ENCODE measurements at regions of chr4 and their contacts with region 1.

Region 1: GRCh38 chr4:25312496-25313200 is at the start of gene ZCCHC4:
- DNase-seq: peak; percentile 79 to 96 (median 88)
- ATAC-seq: peak; percentile 99
- H3K4me3 ChIP-seq: peak within 1 kb of the TSS; percentile 70
- H3K4me3 Mint-ChIP-seq: peak within 1 kb of the TSS; percentile 97
- H3K27ac ChIP-seq: peak within 1 kb of the TSS; percentile 0 to 40
- H3K27ac Mint-ChIP-seq: peak within 1 kb of the TSS; percentile 90
- H3K4me1 ChIP-seq: peaks cover 13% of the 10 kb centered on the region
- H3K4me1 Mint-ChIP-seq: peaks cover 16% of the 10 kb centered on the region
- H3K27me3 ChIP-seq: peaks cover 0 to 3% of the 10 kb centered on the region in 2 experiments
- H3K27me3 Mint-ChIP-seq: peaks cover 14% of the 10 kb centered on the region
- CTCF ChIP-seq: peak; percentile 100
- total RNA-seq, gene ZCCHC4: 6.4 to 6.7 TPM

Region 2: DNA sequence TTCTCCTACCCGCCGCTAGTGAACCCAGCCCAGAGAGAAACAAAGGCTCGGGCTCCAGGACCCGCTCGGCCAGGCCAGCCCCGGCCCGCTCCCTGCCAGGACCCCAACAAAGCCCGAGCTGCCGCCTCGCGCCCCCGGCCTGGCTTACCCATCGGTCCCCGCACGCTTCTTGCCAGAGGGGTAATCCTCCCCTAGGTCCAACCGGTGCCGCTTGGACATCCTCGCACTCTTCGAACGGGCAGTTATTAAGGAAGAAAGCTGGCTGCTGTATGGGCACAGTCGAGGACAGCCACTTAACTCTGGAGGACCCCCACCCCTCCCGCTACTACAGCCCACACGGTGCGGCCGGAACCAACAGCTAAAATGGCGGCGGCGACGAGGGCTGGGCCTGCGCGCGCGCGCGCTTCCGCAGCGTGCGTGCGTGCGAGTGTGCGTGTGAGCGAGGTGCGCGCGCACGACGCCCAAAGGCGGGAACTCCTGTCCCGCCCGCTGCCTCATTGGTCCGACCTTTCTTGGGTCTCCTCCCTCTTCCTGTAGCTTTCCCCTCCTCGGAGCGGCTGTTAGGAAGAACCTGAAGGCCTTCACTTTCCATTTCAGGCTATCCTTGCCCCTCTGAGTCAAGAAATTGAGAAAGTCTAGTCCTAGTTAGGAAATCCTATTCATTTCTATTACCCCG is 728.3 kb before region 1 on chr4 and contains the start of gene DHX15:
- CTCF ChIA-PET with region 1: interaction called, 6 read pairs
- POLR2A ChIA-PET with region 1: interaction called, 8 read pairs
- intact Hi-C with region 1: loop called in 1 of 2 experiments (anchors 5 kb)
- DNase-seq: peak; percentile 83 to 99 (median 90)
- ATAC-seq: peak; percentile 93
- H3K4me3 ChIP-seq: peak within 1 kb of the TSS; percentile 95
- H3K4me3 Mint-ChIP-seq: peak within 1 kb of the TSS; percentile 96
- H3K27ac ChIP-seq: peak within 1 kb of the TSS; percentile 94 to 96
- H3K27ac Mint-ChIP-seq: peak within 1 kb of the TSS; percentile 86
- H3K4me1 ChIP-seq: peaks cover 28% of the 10 kb centered on the region
- H3K4me1 Mint-ChIP-seq: peaks cover 41% of the 10 kb centered on the region
- H3K27me3 ChIP-seq: no peaks in the 10 kb centered on the region
- H3K27me3 Mint-ChIP-seq: peaks cover 5% of the 10 kb centered on the region
- CTCF ChIP-seq: no peak
- total RNA-seq, gene DHX15: 208 to 209 TPM

Region 3: GRCh38 chr4:25234390-25235370 is 78.0 kb before region 1 on chr4:
- CTCF ChIA-PET with region 1: interaction called, 71 read pairs
- POLR2A ChIA-PET with region 1: interaction called, 73 read pairs
- intact Hi-C with region 1: loop called (anchors 1 to 2 kb)
- DNase-seq: peak in 13 of 14 experiments; percentile 5 to 88 (median 18)
- ATAC-seq: peak; percentile 51
- H3K4me3 ChIP-seq: peak overlapping the region; percentile 86
- H3K4me3 Mint-ChIP-seq: peak overlapping the region; percentile 87
- H3K27ac ChIP-seq: peak overlapping the region; percentile 71 to 88
- H3K27ac Mint-ChIP-seq: peak overlapping the region; percentile 91
- H3K4me1 ChIP-seq: peaks cover 29% of the 10 kb centered on the region
- H3K4me1 Mint-ChIP-seq: peaks cover 41% of the 10 kb centered on the region
- H3K27me3 ChIP-seq: no peaks in the 10 kb centered on the region
- H3K27me3 Mint-ChIP-seq: no peaks in the 10 kb centered on the region
- CTCF ChIP-seq: peak; percentile 70

Region 4: GRCh38 chr4:25330905-25331808 is 18.5 kb after region 1 on chr4:
- CTCF ChIA-PET with region 1: interaction called, 14 read pairs
- POLR2A ChIA-PET with region 1: interaction called, 8 read pairs
- intact Hi-C with region 1: no loop called
- DNase-seq: peak in 2 of 14 experiments; percentile 22 to 42
- ATAC-seq: peak; percentile 39
- H3K4me3 ChIP-seq: peak overlapping the region; percentile 44
- H3K4me3 Mint-ChIP-seq: peak overlapping the region; percentile 89
- H3K27ac ChIP-seq: peak overlapping the region in 1 of 2 donors; percentile 43
- H3K27ac Mint-ChIP-seq: peak overlapping the region; percentile 88
- H3K4me1 ChIP-seq: peaks cover 12% of the 10 kb centered on the region
- H3K4me1 Mint-ChIP-seq: peaks cover 14% of the 10 kb centered on the region
- H3K27me3 ChIP-seq: no peaks in the 10 kb centered on the region
- H3K27me3 Mint-ChIP-seq: no peaks in the 10 kb centered on the region
- CTCF ChIP-seq: no peak

Region 5: DNA sequence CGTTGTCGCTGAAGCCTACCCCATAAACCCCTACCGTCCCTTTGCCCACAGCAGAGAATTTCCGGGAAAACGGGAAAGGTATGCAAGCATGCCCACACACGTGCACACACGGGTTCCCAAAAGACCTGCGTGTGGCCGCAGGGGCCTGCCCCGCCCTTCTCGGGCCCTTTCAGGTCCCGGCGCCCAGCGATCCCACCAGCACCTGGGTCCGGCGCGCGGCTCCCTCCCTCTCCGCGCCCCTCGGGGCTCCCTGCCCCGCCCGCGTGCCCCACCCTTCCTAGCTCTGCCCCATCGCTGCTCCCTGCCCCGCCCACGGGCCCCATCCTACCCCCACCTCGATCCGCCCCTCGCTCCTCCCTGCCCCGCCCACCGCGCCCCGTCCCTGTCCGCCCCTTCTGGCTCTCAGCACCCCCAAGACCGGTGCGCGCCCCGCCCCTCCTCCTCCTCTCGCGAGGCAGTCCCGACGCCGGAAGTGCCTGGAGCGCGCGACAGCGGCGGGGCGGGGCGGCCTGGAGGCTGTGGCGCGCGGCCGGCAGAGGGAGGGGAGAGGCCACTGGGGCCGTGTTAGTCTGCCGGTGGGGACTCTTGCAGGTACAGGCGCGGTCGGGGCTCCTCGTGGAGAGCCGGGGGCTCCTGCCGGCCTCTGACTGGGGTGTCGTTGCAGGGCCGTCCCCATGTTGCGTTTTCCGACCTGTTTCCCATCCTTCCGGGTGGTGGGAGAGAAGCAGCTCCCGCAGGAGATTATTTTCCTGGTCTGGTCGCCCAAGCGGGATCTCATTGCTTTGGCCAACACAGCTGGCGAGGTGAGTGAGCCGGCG is 64.3 kb after region 1 on chr4 and contains the start of gene ANAPC4:
- CTCF ChIA-PET with region 1: interaction called, 24 read pairs
- POLR2A ChIA-PET with region 1: interaction called, 22 read pairs
- intact Hi-C with region 1: loop called (anchors 1 kb)
- DNase-seq: peak; percentile 95 to 99 (median 97)
- ATAC-seq: peak; percentile 94
- H3K4me3 ChIP-seq: peak within 1 kb of the TSS; percentile 94
- H3K4me3 Mint-ChIP-seq: no peak within 1 kb of the TSS
- H3K27ac ChIP-seq: peak within 1 kb of the TSS; percentile 42 to 48
- H3K27ac Mint-ChIP-seq: peak within 1 kb of the TSS; percentile 81
- H3K4me1 ChIP-seq: peaks cover 34% of the 10 kb centered on the region
- H3K4me1 Mint-ChIP-seq: peaks cover 7% of the 10 kb centered on the region
- H3K27me3 ChIP-seq: no peaks in the 10 kb centered on the region
- H3K27me3 Mint-ChIP-seq: no peaks in the 10 kb centered on the region
- CTCF ChIP-seq: no peak
- total RNA-seq, gene ANAPC4: 24.4 to 26.0 TPM

Region 6: GRCh38 chr4:26583865-26584652 is 1271.4 kb after region 1 on chr4 and contains the start of gene TBC1D19:
- CTCF ChIA-PET with region 1: no interaction called
- POLR2A ChIA-PET with region 1: interaction called, 3 read pairs
- intact Hi-C with region 1: loop called in 1 of 2 experiments (anchors 5 kb)
- DNase-seq: peak; percentile 78 to 93 (median 86)
- ATAC-seq: peak; percentile 87
- H3K4me3 ChIP-seq: peak within 1 kb of the TSS; percentile 76
- H3K4me3 Mint-ChIP-seq: peak within 1 kb of the TSS; percentile 96
- H3K27ac ChIP-seq: peak within 1 kb of the TSS; percentile 81 to 85
- H3K27ac Mint-ChIP-seq: peak within 1 kb of the TSS; percentile 95
- H3K4me1 ChIP-seq: peaks cover 11% of the 10 kb centered on the region
- H3K4me1 Mint-ChIP-seq: peaks cover 28% of the 10 kb centered on the region
- H3K27me3 ChIP-seq: no peaks in the 10 kb centered on the region
- H3K27me3 Mint-ChIP-seq: peaks cover 3% of the 10 kb centered on the region
- CTCF ChIP-seq: no peak
- total RNA-seq, gene TBC1D19: 4.0 to 4.8 TPM

Measured in CD4-positive, alpha-beta T cell (primary cell).